ENCODE measurements at regions of chr10 and their contacts with region 1.

Region 1: GRCh38 chr10:51422311-51423120 is 276.9 kb downstream of the CSTF2T start:
- DNase-seq: peak; percentile 76
- ATAC-seq: peak; percentile 88
- H3K4me3 ChIP-seq: no peak overlapping the region
- H3K27ac ChIP-seq: peak overlapping the region; percentile 33; the same call in 1 of the 2 replicates
- H3K4me1 ChIP-seq: peaks cover 6% of the 10 kb centered on the region
- H3K27me3 ChIP-seq: no peaks in the 10 kb centered on the region
- CTCF ChIP-seq: peak; percentile 85
- POLR2A ChIP-seq: no peak
- RAD21 ChIP-seq: peak; percentile 88

Region 2: DNA sequence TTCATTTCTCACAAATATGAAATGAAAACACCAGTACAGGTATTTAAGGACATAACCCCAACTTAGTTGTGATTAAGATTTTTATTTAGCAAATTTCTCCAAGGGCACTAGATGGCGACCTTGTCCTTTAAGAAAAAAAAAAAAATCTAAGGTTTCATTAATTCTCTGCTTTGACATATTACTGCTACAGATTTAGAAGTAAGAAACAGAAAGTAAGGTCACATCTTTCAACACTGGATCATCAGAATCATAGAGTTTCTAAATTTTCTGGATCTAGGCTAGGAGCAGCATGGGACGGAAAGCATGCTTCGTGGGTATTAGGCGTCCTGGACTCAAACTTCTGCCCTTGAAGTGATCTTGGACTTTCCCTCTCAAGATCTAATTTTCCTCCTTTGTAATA is 433.7 kb before region 1 on chr10:
- CTCF ChIA-PET with region 1: no interaction called
- POLR2A ChIA-PET with region 1: no interaction called
- dilution Hi-C with region 1: no loop called
- in situ Hi-C with region 1: loop called (anchors 10 kb)
- intact Hi-C with region 1: no loop called
- DNase-seq: peak; percentile 53
- ATAC-seq: no peak
- H3K4me3 ChIP-seq: peak overlapping the region; percentile 22; the same call in 1 of the 2 replicates
- H3K27ac ChIP-seq: peak overlapping the region; percentile 33; the same call in 1 of the 2 replicates
- H3K4me1 ChIP-seq: no peaks in the 10 kb centered on the region; the same call in 1 of the 2 replicates
- H3K27me3 ChIP-seq: no peaks in the 10 kb centered on the region
- CTCF ChIP-seq: peak; percentile 60
- POLR2A ChIP-seq: no peak
- RAD21 ChIP-seq: peak; percentile 53

Region 3: DNA sequence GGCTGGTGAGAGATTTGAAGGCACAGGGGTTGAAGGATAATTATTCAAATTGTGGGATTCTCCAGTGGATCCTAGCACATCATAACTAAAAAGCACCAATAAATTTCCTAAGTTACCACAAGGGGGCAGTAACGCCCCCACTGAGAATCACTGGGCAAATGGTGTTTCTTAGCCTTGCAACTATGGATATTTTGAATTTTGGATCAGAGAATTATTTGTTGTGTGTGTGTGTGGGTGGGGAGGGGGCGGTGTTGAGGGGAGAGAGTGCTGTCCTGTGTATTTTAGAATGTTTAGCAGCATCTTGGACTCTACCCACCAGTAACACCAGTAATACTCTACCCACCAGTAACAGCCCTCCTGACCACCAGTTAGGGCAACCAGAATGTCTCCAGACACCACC is 411.5 kb before region 1 on chr10:
- CTCF ChIA-PET with region 1: no interaction called
- POLR2A ChIA-PET with region 1: no interaction called
- dilution Hi-C with region 1: no loop called
- in situ Hi-C with region 1: no loop called
- intact Hi-C with region 1: loop called (anchors 5 kb)
- DNase-seq: peak; percentile 54
- ATAC-seq: peak; percentile 59; the same call in 1 of the 2 replicates
- H3K4me3 ChIP-seq: no peak overlapping the region
- H3K27ac ChIP-seq: no peak overlapping the region
- H3K4me1 ChIP-seq: no peaks in the 10 kb centered on the region
- H3K27me3 ChIP-seq: no peaks in the 10 kb centered on the region
- CTCF ChIP-seq: peak; percentile 69
- POLR2A ChIP-seq: no peak
- RAD21 ChIP-seq: peak; percentile 67

Region 4: GRCh38 chr10:51074238-51075028 is 348.1 kb before region 1 on chr10 and contains the start of gene PRKG1:
- CTCF ChIA-PET with region 1: interaction called, 3 read pairs
- POLR2A ChIA-PET with region 1: no interaction called
- dilution Hi-C with region 1: no loop called
- in situ Hi-C with region 1: loop called (anchors 5 kb)
- intact Hi-C with region 1: no loop called
- DNase-seq: peak; percentile 85
- ATAC-seq: peak; percentile 92
- H3K4me3 ChIP-seq: peak within 1 kb of the TSS; percentile 62
- H3K27ac ChIP-seq: peak within 1 kb of the TSS; percentile 82
- H3K4me1 ChIP-seq: peaks cover 6% of the 10 kb centered on the region; the same call in 1 of the 2 replicates
- H3K27me3 ChIP-seq: no peaks in the 10 kb centered on the region
- CTCF ChIP-seq: no peak
- POLR2A ChIP-seq: 0 out of 2 replicates have a peak, but pooled peaks have one; percentile 19
- RAD21 ChIP-seq: peak; percentile 16; the same call in 1 of the 2 replicates
- total RNA-seq, gene PRKG1: 18.3 and 22.5 TPM in 2 replicates

Region 5: DNA sequence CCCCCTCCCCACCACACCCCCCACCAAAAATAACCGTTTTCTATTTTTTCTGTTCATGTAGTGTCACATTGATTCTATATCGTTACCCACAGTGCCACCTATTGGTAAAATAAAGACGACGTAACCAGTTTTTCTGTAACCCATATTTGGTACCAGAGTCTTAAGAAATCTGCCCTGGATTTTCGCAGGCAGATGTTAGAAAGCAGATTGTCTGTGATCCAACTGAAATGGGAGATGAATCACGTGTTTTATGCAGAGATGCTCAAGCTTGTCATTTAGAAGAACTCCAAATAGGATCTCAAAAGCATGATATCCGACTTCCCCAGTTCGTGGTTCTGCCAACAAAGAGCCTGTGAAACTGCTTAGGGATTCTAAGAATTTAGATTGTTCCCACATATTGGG is 538.0 kb after region 1 on chr10:
- CTCF ChIA-PET with region 1: interaction called, 3 read pairs
- POLR2A ChIA-PET with region 1: no interaction called
- dilution Hi-C with region 1: no loop called
- in situ Hi-C with region 1: loop called (anchors 25 kb)
- intact Hi-C with region 1: loop called (anchors 5 kb)
- DNase-seq: peak; percentile 76
- ATAC-seq: peak; percentile 66
- H3K4me3 ChIP-seq: no peak overlapping the region
- H3K27ac ChIP-seq: no peak overlapping the region
- H3K4me1 ChIP-seq: no peaks in the 10 kb centered on the region
- H3K27me3 ChIP-seq: no peaks in the 10 kb centered on the region
- CTCF ChIP-seq: peak; percentile 63
- POLR2A ChIP-seq: no peak
- RAD21 ChIP-seq: peak; percentile 73

Region 6: GRCh38 chr10:52210161-52210560 is 787.6 kb after region 1 on chr10:
- CTCF ChIA-PET with region 1: no interaction called
- POLR2A ChIA-PET with region 1: no interaction called
- dilution Hi-C with region 1: no loop called
- in situ Hi-C with region 1: no loop called
- intact Hi-C with region 1: loop called (anchors 2 kb)
- DNase-seq: no peak
- ATAC-seq: no peak
- H3K4me3 ChIP-seq: no peak overlapping the region
- H3K27ac ChIP-seq: no peak overlapping the region
- H3K4me1 ChIP-seq: no peaks in the 10 kb centered on the region
- H3K27me3 ChIP-seq: no peaks in the 10 kb centered on the region
- CTCF ChIP-seq: no peak
- POLR2A ChIP-seq: no peak
- RAD21 ChIP-seq: no peak

Measured in IMR-90 (cell line).